Activated T-helper 2 cell treated with anti-CD3 and anti-CD28 coated beads, Interferon-gamma antibody, Interleukin-2, Interleukin-4, amounts not matched to agents 10 μg/mL and 5 μg/mL and 100 μg/mL, durations not matched to agents 14 hours and 24 hours and 36 hours (primary cell): ENCODE measurements at regions of chr2 and their contacts with region 1.

Region 1: GRCh38 chr2:246489-247144 is 17.2 kb downstream of the SH3YL1 start:
- DNase-seq: no peak
- H3K4me3 Mint-ChIP-seq: no peak overlapping the region
- H3K27ac Mint-ChIP-seq: no peak overlapping the region
- H3K4me1 Mint-ChIP-seq: peaks cover 4% of the 10 kb centered on the region
- H3K27me3 Mint-ChIP-seq: no peaks in the 10 kb centered on the region

Region 2: GRCh38 chr2:193141-193671 is 53.4 kb before region 1 on chr2:
- intact Hi-C with region 1: no loop called
- DNase-seq: no peak
- H3K4me3 Mint-ChIP-seq: no peak overlapping the region
- H3K27ac Mint-ChIP-seq: no peak overlapping the region
- H3K4me1 Mint-ChIP-seq: no peaks in the 10 kb centered on the region
- H3K27me3 Mint-ChIP-seq: no peaks in the 10 kb centered on the region

Region 3: DNA sequence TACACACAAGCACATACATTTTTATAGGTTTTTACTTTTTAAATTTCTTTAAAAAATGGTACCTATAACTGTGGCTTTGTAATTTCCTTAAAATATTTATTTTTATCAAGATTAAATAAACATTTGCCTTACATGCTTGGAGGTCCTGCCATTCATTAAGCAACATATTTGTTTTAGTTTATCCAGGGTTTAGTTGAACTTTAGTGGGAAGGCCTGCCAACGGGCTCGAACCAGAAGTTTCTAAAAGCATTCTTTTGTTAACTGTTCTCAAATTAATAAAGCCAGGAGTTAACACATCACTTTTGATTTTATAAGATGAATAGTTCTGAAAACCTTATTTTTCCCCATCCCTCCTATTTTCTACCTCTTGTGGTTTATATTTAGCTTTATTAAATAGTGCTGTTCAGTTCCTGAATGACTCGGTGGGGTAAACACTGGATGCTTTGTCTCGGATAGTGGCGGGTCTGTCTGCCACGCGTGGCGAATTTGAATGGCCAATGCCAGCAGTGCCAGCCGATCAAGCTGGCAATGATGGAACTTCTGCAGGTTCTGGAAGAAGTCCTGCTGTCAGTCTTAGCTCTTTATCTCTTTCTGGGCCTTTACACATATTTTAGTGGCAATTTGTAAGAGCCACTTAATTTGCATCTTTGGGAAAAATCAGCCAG is 15.0 kb before region 1 on chr2:
- intact Hi-C with region 1: loop called (anchors 1 kb)
- DNase-seq: no peak
- H3K4me3 Mint-ChIP-seq: no peak overlapping the region
- H3K27ac Mint-ChIP-seq: peak overlapping the region; percentile 69
- H3K4me1 Mint-ChIP-seq: peaks cover 37% of the 10 kb centered on the region
- H3K27me3 Mint-ChIP-seq: no peaks in the 10 kb centered on the region

Region 4: DNA sequence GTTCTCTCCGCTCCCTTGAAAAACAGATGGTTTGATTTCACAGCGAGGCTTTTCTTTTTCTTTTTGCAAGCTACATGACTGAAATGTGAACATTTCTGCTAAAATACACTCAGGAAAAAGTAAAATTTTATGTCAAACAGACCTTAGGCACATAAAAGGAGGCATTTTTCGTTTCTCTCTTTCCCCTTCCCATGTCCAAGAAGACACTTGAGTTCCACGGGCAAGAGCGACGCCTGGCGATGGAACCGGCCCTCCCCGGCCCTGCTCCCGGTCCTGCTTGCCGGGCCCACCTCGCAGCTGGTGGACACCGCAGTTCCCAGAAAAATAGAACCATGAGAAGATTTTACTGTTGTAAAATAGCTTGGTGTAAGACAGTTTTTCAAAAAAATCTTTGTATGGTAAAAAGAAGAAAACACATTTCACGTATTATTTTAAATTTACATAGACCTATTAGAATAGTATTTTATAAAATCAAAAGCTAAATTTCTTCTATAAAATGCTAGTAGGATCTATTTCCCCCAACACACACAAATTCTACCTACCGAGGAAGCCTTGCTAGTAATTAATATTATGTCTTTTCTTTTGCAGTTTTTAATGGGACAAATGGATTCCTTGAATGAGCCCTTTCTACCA is 43.6 kb after region 1 on chr2:
- intact Hi-C with region 1: loop called (anchors 5 kb)
- DNase-seq: peak; percentile 28
- H3K4me3 Mint-ChIP-seq: peak overlapping the region; percentile 71
- H3K27ac Mint-ChIP-seq: no peak overlapping the region
- H3K4me1 Mint-ChIP-seq: peaks cover 8% of the 10 kb centered on the region
- H3K27me3 Mint-ChIP-seq: peaks cover 34% of the 10 kb centered on the region

Region 5: DNA sequence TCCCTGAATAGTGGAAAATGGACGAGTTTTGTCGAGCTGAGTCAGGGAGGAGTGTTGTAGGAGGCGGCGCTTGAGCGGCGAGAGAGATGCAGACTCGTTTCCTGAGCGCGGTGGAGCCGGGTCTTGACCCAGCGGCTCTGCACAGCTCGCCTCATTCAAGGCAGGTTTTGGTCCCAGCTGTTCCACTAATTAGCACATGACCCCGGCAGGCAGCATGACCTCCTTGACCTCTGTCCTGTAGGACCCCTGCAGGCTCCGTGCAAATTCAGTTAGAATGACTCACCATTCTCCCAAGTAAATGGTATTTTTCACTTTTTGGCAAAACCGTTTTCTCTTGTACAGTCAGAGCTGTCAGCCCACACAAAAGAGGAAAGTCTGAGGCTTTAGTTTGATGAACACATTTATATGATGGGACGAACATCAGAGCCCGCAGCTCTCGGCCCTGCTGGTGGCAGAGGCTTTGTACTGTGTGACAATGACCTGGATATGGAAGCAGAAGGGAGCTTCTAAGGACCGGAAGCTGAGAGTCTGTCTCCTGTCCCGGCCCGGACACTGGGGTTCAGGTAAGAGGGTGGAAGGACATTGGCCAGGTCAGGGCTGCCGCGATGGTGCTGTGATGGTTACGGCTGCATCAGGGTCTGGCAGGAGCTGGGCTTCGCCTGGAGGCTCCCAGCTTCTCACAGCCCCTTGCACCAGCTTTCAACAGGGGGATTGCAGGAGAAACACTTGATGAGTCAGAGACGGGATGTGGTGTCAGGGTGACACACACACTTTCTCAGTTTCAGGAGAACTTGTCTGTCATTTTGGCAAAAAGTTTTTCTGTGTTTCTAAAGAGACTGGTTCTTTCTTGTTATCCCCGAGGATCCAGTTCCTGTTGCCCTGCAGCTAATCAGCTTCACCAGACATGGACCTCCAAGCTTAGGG is 71.1 kb after region 1 on chr2:
- intact Hi-C with region 1: no loop called
- DNase-seq: no peak
- H3K4me3 Mint-ChIP-seq: peak overlapping the region; percentile 55
- H3K27ac Mint-ChIP-seq: peak overlapping the region; percentile 88
- H3K4me1 Mint-ChIP-seq: peaks cover 31% of the 10 kb centered on the region
- H3K27me3 Mint-ChIP-seq: peaks cover 4% of the 10 kb centered on the region